ENCODE measurements at regions of chr3 and their contacts with region 1.

Region 1: DNA sequence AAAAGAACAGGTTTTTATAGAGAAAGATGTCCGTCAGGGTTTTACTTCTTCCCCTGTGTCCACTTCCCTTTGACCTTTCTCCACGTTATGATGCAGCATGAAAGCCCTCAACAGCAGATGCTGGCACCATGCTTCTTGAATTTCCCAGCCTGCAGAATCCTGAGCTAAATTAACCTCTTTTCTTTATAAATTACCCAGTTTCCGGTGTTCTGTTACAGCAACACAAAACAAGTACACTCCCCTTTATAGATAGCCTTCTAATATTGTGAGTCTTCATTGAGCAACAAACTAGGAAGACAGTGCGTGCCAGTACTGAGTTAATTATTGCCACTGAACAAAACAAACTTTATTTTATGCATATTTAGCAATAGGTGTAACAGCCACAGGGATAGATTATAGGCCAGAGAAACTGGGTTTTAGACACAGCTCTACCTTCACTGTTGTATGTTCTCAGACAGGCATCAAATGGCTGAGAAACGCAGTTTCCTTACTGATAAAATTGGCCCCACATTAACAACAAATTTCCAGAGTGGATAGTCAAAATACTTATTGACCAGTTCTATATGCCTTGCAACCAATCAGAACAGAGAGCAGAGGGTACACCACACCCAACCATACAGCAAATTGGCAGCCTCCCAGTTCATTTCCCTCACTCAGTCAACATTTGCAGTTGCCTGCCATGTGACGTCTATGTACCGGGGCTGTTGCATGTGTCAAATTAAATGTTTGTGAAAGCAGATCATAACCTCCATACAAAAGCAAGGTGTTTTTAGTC is 14.4 kb upstream of the TBL1XR1 start:
- DNase-seq: no peak
- ATAC-seq: no peak
- H3K4me3 ChIP-seq: no peak overlapping the region
- H3K27ac ChIP-seq: no peak overlapping the region
- H3K4me1 ChIP-seq: no peaks in the 10 kb centered on the region
- H3K27me3 ChIP-seq: no peaks in the 10 kb centered on the region
- CTCF ChIP-seq: no peak
- POLR2A ChIP-seq: no peak
- RAD21 ChIP-seq: no peak

Region 2: DNA sequence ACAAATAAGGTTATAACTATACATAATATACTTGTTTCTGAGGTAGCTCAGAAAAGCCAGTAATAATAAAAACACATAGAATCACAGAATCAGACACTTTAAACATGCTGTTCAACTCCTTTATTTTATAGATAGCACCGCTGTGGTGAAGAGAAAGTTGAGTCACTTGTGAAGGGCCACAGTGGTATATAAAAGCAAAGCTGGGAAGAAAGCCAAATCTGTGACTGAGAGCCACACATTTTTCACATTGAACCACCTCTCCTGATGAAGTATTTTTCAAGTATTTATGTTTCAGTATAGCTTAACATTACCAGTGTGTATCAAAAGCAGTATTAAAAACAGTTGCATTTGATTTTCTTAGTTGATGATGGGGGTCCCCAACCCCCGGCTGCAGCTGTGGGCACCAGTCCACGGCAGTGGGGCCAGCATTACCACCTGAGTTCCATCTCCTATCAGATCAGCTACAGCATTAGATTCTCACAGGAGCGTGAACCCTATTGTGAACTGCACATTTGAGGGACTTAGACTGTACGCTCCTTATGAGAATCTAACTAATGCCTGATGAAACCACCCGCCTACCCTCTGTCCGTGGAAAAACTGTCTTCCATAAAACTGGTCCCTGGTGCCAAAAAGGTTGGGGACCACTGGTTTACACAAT is 60.6 kb before region 1 on chr3:
- CTCF ChIA-PET with region 1: no interaction called
- POLR2A ChIA-PET with region 1: no interaction called
- dilution Hi-C with region 1: no loop called
- in situ Hi-C with region 1: no loop called
- intact Hi-C with region 1: no loop called
- DNase-seq: peak; percentile 93
- ATAC-seq: peak; percentile 77
- H3K4me3 ChIP-seq: no peak overlapping the region
- H3K27ac ChIP-seq: no peak overlapping the region
- H3K4me1 ChIP-seq: peaks cover 14% of the 10 kb centered on the region
- H3K27me3 ChIP-seq: no peaks in the 10 kb centered on the region
- CTCF ChIP-seq: no peak
- POLR2A ChIP-seq: no peak
- RAD21 ChIP-seq: no peak

Region 3: DNA sequence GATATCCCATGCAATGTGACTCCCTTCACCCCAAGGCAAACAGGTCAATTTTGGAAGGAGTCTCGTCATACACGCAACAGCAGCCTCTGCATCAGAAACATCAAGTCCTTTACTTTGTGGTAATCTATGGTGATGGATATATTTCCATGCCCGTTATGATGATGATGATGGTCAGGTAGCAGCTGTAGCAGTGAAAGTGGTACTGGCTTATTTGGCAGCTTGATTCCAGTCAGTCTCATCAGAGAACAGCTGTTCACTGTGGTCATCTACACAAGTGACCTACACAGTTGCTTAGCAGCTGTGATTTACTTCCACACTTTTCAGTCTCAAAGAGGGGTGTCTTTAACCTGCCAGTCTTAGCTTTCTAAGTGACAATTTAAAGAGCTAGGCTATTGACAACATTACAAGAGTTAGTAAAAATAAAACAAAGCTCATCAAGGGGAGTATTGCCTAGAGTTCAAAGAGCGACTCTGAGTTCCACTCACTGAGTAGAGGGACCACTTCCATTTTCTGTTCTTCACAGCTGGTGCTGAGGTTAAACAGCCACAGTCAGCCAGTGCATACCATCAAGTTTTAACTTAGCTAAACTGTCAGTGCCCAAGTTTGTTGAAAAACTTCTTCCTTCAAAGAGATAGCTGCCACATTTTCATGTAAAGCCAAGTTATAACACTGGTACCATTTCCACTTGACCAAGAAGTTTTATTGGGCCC is 737.2 kb after region 1 on chr3:
- CTCF ChIA-PET with region 1: no interaction called
- POLR2A ChIA-PET with region 1: no interaction called
- dilution Hi-C with region 1: no loop called
- in situ Hi-C with region 1: no loop called
- intact Hi-C with region 1: no loop called
- DNase-seq: no peak
- ATAC-seq: no peak
- H3K4me3 ChIP-seq: no peak overlapping the region
- H3K27ac ChIP-seq: no peak overlapping the region
- H3K4me1 ChIP-seq: no peaks in the 10 kb centered on the region
- H3K27me3 ChIP-seq: no peaks in the 10 kb centered on the region
- CTCF ChIP-seq: no peak
- POLR2A ChIP-seq: no peak
- RAD21 ChIP-seq: no peak

Region 4: GRCh38 chr3:178022599-178022998 is 810.9 kb after region 1 on chr3:
- CTCF ChIA-PET with region 1: no interaction called
- POLR2A ChIA-PET with region 1: no interaction called
- dilution Hi-C with region 1: no loop called
- in situ Hi-C with region 1: no loop called
- intact Hi-C with region 1: no loop called
- DNase-seq: peak; percentile 25
- ATAC-seq: no peak
- H3K4me3 ChIP-seq: no peak overlapping the region
- H3K27ac ChIP-seq: no peak overlapping the region
- H3K4me1 ChIP-seq: no peaks in the 10 kb centered on the region
- H3K27me3 ChIP-seq: no peaks in the 10 kb centered on the region
- CTCF ChIP-seq: no peak
- POLR2A ChIP-seq: no peak
- RAD21 ChIP-seq: no peak

Region 5: DNA sequence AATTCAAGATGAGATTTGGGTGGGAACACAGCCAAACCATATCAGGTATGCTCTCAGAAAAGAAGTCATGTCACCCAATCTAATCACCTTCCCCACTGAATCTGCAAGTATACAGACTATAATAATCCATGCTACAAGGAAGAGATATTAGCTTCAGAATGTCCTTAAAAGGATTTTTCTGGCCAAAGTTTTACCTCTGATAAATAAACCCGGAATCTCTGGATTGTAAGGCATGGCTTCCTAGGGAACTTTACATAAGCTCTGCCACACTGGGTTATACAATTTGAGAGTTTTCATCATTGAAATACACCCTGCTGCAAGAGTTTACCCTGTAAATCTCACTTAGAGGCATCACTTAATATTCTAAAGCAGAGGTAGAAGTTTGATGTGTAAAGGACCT is 994.0 kb after region 1 on chr3:
- CTCF ChIA-PET with region 1: no interaction called
- POLR2A ChIA-PET with region 1: no interaction called
- dilution Hi-C with region 1: no loop called
- in situ Hi-C with region 1: no loop called
- intact Hi-C with region 1: loop called (anchors 5 kb)
- DNase-seq: peak; percentile 51
- ATAC-seq: peak; percentile 74
- H3K4me3 ChIP-seq: no peak overlapping the region
- H3K27ac ChIP-seq: peak overlapping the region; percentile 48; the same call in 1 of the 2 replicates
- H3K4me1 ChIP-seq: peaks cover 7% of the 10 kb centered on the region
- H3K27me3 ChIP-seq: no peaks in the 10 kb centered on the region
- CTCF ChIP-seq: no peak
- POLR2A ChIP-seq: no peak
- RAD21 ChIP-seq: no peak

Region 6: DNA sequence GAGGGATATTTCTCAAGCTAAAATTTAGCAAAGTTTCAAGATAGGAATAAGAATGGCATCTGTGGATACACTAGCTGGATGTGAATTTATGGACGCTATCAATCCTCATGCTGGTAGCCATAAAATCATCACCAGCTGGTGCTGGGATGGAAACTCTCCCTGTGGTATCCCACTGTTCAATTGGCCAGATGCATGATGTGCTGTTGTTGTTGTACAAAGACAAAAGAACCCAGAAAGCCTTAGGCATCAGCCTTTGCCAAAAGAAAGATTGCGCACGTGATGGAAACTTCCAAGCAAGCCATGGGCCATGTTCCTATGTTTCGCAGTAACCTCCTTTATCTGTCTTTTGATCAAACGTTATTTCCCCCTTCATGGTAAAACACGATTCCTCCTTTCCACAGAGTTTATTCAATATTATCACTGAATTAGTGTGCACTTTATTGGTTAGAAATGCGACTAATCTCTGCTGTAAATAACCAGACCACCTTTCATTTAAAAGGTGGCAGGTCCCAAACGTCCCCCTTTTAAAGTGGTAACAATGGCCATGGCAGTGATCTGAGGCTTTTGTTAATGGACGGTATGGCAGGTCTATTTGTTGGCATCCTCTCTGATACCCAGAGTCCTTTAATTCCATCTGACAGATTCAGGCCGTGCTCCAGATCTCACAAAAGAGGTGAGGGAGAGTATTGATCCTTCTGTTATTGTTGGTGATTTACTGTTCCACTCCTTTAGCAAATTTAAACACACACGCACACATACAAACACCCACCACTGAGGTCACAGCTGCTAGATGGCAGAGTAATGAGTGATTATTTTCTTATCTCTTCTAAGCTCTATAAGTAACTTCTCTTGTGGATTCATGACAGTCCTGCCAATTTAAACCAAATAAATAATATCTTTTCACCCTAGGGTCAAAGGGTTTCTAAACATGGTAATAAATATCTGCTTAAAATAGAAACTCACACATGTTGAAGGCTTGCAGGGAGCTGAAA is 1033.3 kb after region 1 on chr3:
- CTCF ChIA-PET with region 1: no interaction called
- POLR2A ChIA-PET with region 1: interaction called, 17 read pairs
- dilution Hi-C with region 1: no loop called
- in situ Hi-C with region 1: no loop called
- intact Hi-C with region 1: no loop called
- DNase-seq: peak; percentile 66
- ATAC-seq: peak; percentile 61; the same call in 1 of the 2 replicates
- H3K4me3 ChIP-seq: no peak overlapping the region
- H3K27ac ChIP-seq: no peak overlapping the region
- H3K4me1 ChIP-seq: peaks cover 2% of the 10 kb centered on the region; the same call in 1 of the 2 replicates
- H3K27me3 ChIP-seq: no peaks in the 10 kb centered on the region
- CTCF ChIP-seq: no peak
- POLR2A ChIP-seq: no peak
- RAD21 ChIP-seq: no peak

Measured in IMR-90 (cell line).